ENCODE measurements at regions of chr5 and their contacts with region 1.

Region 1: GRCh38 chr5:116859666-116860320 is 285.2 kb upstream of the SEMA6A start:
- DNase-seq: no peak
- ATAC-seq: no peak
- H3K4me3 ChIP-seq: no peak overlapping the region
- H3K27ac ChIP-seq: no peak overlapping the region
- H3K4me1 ChIP-seq: no peaks in the 10 kb centered on the region
- H3K27me3 ChIP-seq: no peaks in the 10 kb centered on the region
- CTCF ChIP-seq: no peak
- POLR2A ChIP-seq: no peak
- RAD21 ChIP-seq: no peak

Region 2: GRCh38 chr5:116989995-116990394 is 130.2 kb after region 1 on chr5:
- CTCF ChIA-PET with region 1: no interaction called
- POLR2A ChIA-PET with region 1: no interaction called
- dilution Hi-C with region 1: no loop called
- in situ Hi-C with region 1: no loop called
- intact Hi-C with region 1: loop called (anchors 10 kb)
- DNase-seq: no peak
- ATAC-seq: no peak
- H3K4me3 ChIP-seq: no peak overlapping the region
- H3K27ac ChIP-seq: no peak overlapping the region
- H3K4me1 ChIP-seq: no peaks in the 10 kb centered on the region
- H3K27me3 ChIP-seq: no peaks in the 10 kb centered on the region
- CTCF ChIP-seq: no peak
- POLR2A ChIP-seq: no peak
- RAD21 ChIP-seq: no peak

Region 3: DNA sequence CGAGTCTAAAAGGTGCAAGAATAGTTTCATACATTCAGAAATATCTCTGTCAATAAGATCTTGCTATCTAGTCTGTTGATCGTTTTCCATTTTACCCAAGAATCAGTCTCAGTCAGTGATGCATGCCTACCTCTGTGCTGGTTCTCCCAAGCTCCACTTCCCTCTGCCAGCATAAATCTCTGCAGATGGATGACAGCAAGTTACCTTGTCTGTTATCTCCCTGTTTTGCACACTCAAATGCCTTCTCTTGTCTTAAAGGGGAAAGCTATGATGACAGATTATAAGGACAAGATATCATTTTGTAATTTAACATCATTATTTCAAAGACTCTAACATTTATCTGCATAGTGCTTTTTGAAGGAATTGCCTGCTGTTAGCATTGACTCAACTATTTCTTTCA is 517.0 kb after region 1 on chr5:
- CTCF ChIA-PET with region 1: interaction called, 11 read pairs
- POLR2A ChIA-PET with region 1: no interaction called
- dilution Hi-C with region 1: no loop called
- in situ Hi-C with region 1: no loop called
- intact Hi-C with region 1: no loop called
- DNase-seq: no peak
- ATAC-seq: no peak
- H3K4me3 ChIP-seq: no peak overlapping the region
- H3K27ac ChIP-seq: no peak overlapping the region
- H3K4me1 ChIP-seq: no peaks in the 10 kb centered on the region
- H3K27me3 ChIP-seq: no peaks in the 10 kb centered on the region
- CTCF ChIP-seq: no peak
- POLR2A ChIP-seq: no peak
- RAD21 ChIP-seq: no peak